ENCODE measurements at regions of chr2 and their contacts with region 1.

Region 1: DNA sequence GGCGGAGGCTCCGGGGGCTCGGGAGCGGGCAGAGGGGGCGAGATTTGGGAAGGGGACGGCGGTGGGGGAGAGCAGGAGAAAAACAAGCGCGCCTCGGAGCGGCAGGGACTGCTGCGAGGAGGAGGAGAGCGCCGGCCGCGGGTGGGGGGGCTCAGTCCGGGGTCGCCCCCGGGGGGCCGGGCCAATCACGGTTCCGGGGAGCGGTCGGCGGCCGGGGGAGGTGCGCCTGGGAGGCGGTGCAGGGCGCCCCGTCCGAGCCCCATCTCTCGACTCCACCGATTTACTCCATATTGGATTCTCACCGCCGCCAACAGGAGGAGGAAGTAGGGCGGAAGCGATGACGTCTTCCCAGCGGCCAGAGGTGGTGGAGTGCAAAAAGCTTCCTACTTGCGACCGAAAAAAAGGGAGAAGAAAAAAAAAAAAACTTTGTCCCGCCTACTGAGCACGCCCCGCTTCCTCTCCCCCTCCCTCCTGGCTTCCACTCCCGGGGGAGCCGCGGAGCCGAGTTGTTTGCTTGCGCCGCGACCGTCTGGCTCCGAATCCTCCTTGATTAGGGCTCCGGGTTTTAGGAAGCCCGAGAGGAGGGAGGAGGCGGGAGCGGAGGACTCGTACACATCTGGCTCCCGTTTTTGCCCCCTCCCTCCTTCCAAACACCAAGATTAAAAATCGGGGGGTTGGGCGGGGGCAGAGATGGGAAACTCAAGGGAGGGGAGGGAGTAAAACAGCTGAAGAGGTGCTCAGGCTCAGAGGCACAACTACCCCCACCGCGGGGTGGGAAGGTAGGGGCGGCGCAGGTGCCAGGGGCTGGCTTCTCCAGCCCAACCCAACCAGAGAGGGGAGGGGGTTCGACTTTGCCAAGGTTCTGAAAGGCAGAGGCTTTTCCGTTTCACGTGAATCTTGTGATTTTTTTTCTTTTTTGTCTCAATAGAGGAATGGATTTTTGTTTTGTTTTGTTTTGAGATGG is at the start of gene SPRED2:
- DNase-seq: peak; percentile 87 to 94 (median 88)
- H3K4me3 ChIP-seq: peak within 1 kb of the TSS; percentile 64 to 87 (median 82)
- H3K4me3 Mint-ChIP-seq: peak within 1 kb of the TSS; percentile 96
- H3K27ac ChIP-seq: peak within 1 kb of the TSS in 1 of 2 donors; percentile 39
- H3K27ac Mint-ChIP-seq: peak within 1 kb of the TSS in 6 of 7 donors; percentile 80 to 93 (median 86)
- H3K4me1 ChIP-seq: peaks cover 29 to 43% of the 10 kb centered on the region in 2 donors
- H3K4me1 Mint-ChIP-seq: peaks cover 30% of the 10 kb centered on the region
- H3K27me3 ChIP-seq: peaks cover 30 to 55% of the 10 kb centered on the region in 2 donors
- H3K27me3 Mint-ChIP-seq: peaks cover 45 to 74% (median 56%) of the 10 kb centered on the region in 3 donors
- CTCF ChIP-seq: no peak
- polyA plus RNA-seq, gene SPRED2: 0.20 to 2.0 (median 0.33) TPM

Region 2: DNA sequence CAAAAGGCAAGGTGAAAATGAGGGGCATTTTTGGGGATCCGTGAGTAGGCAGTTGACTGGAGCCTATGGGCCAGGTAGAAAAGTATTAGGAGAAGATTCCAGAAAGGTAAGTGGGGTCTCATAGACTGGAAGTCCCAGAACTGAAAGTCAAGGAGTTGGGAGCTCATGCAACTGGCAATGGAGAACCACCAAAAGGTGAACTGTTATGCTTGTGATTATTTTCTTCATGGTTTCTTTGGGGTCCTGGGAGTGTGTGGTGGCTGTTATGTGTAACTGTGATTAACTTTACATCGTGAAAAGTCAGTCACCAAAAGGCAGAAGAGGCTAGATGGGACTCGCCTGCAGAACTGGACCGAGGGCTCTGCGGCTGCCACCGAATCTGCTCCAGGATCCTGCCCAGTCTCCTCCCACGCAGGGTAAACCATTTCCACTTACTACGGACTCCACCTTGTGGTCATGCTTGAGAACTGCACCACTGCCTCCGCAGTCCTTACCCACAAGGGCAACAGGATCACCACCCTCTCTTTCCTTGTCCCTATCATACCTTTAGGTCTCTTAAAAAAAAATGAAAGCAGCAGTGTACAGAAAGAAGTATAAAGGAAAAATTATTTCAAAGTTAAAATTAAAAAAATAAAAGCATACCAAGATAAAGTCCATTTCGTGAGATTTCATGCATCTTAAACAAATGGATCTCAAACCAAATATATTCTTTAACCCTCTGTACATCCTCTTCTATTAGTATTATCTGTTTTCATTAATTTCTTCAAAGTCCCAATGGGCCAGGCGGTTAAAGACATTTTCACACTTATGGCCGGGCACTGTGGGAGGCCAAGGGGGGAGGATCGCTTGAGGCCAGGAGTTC is 391.9 kb before region 1 on chr2:
- intact Hi-C with region 1: no loop called
- DNase-seq: peak; percentile 76 to 81 (median 80)
- H3K4me3 ChIP-seq: no peak overlapping the region
- H3K4me3 Mint-ChIP-seq: peak overlapping the region; percentile 38 to 80
- H3K27ac ChIP-seq: no peak overlapping the region
- H3K27ac Mint-ChIP-seq: no peak overlapping the region
- H3K4me1 ChIP-seq: peaks cover 4 to 7% of the 10 kb centered on the region in 2 donors
- H3K4me1 Mint-ChIP-seq: peaks cover 8% of the 10 kb centered on the region
- H3K27me3 ChIP-seq: no peaks in the 10 kb centered on the region
- H3K27me3 Mint-ChIP-seq: peaks cover 0 to 2% (median 0%) of the 10 kb centered on the region in 3 donors
- CTCF ChIP-seq: peak; percentile 95

Region 3: GRCh38 chr2:65064728-65065552 is 367.6 kb before region 1 on chr2:
- intact Hi-C with region 1: loop called in 1 of 2 experiments (anchors 10 kb)
- DNase-seq: peak; percentile 96 to 99 (median 96)
- H3K4me3 ChIP-seq: peak overlapping the region in 1 of 3 experiments; percentile 41
- H3K4me3 Mint-ChIP-seq: peak overlapping the region; percentile 67 to 76
- H3K27ac ChIP-seq: peak overlapping the region; percentile 85 to 92
- H3K27ac Mint-ChIP-seq: peak overlapping the region; percentile 95 to 100 (median 99)
- H3K4me1 ChIP-seq: peaks cover 35 to 38% of the 10 kb centered on the region in 2 donors
- H3K4me1 Mint-ChIP-seq: peaks cover 46% of the 10 kb centered on the region
- H3K27me3 ChIP-seq: no peaks in the 10 kb centered on the region
- H3K27me3 Mint-ChIP-seq: peaks cover 0 to 2% (median 0%) of the 10 kb centered on the region in 3 donors
- CTCF ChIP-seq: peak; percentile 92

Region 4: GRCh38 chr2:65227425-65228262 is 204.9 kb before region 1 on chr2 and contains the start of gene ACTR2:
- intact Hi-C with region 1: loop called (anchors 5 kb)
- DNase-seq: peak; percentile 97 to 98 (median 98)
- H3K4me3 ChIP-seq: peak within 1 kb of the TSS; percentile 79 to 92 (median 89)
- H3K4me3 Mint-ChIP-seq: peak within 1 kb of the TSS; percentile 93 to 98
- H3K27ac ChIP-seq: peak within 1 kb of the TSS; percentile 96 to 99
- H3K27ac Mint-ChIP-seq: peak within 1 kb of the TSS; percentile 97 to 100 (median 99)
- H3K4me1 ChIP-seq: peaks cover 38 to 52% of the 10 kb centered on the region in 2 donors
- H3K4me1 Mint-ChIP-seq: peaks cover 35% of the 10 kb centered on the region
- H3K27me3 ChIP-seq: no peaks in the 10 kb centered on the region
- H3K27me3 Mint-ChIP-seq: peaks cover 0 to 6% (median 2%) of the 10 kb centered on the region in 3 donors
- CTCF ChIP-seq: no peak
- polyA plus RNA-seq, gene ACTR2: 88.7 to 560 (median 342) TPM

Region 5: GRCh38 chr2:65264821-65265670 is 167.5 kb before region 1 on chr2:
- intact Hi-C with region 1: loop called in 1 of 2 experiments (anchors 10 kb)
- DNase-seq: peak; percentile 15 to 40 (median 24)
- H3K4me3 ChIP-seq: no peak overlapping the region
- H3K4me3 Mint-ChIP-seq: no peak overlapping the region
- H3K27ac ChIP-seq: no peak overlapping the region
- H3K27ac Mint-ChIP-seq: peak overlapping the region in 1 of 7 donors; percentile 21
- H3K4me1 ChIP-seq: no peaks in the 10 kb centered on the region
- H3K4me1 Mint-ChIP-seq: no peaks in the 10 kb centered on the region
- H3K27me3 ChIP-seq: no peaks in the 10 kb centered on the region
- H3K27me3 Mint-ChIP-seq: peaks cover 0 to 2% (median 0%) of the 10 kb centered on the region in 3 donors
- CTCF ChIP-seq: peak; percentile 81

Region 6: GRCh38 chr2:65366595-65367125 is 65.8 kb before region 1 on chr2:
- intact Hi-C with region 1: loop called (anchors 5 to 10 kb)
- DNase-seq: peak; percentile 85 to 97 (median 94)
- H3K4me3 ChIP-seq: peak overlapping the region in 1 of 3 experiments; percentile 55
- H3K4me3 Mint-ChIP-seq: peak overlapping the region in 1 of 2 donors; percentile 28
- H3K27ac ChIP-seq: peak overlapping the region in 1 of 2 donors; percentile 77
- H3K27ac Mint-ChIP-seq: peak overlapping the region; percentile 71 to 88 (median 80)
- H3K4me1 ChIP-seq: peaks cover 39 to 51% of the 10 kb centered on the region in 2 donors
- H3K4me1 Mint-ChIP-seq: peaks cover 48% of the 10 kb centered on the region
- H3K27me3 ChIP-seq: no peaks in the 10 kb centered on the region
- H3K27me3 Mint-ChIP-seq: peaks cover 0 to 4% (median 0%) of the 10 kb centered on the region in 3 donors
- CTCF ChIP-seq: no peak